ENCODE measurements at regions of chr17 and their contacts with region 1.

Region 1: GRCh38 chr17:73591296-73592078 is 52.8 kb downstream of the SDK2 start:
- DNase-seq: peak; percentile 76
- ATAC-seq: peak; percentile 78
- H3K4me3 ChIP-seq: peak overlapping the region in 4 of 5 experiments; percentile 32 to 59 (median 44)
- H3K4me3 Mint-ChIP-seq: peak overlapping the region; percentile 88
- H3K27ac ChIP-seq: peak overlapping the region; percentile 87 to 97
- H3K27ac Mint-ChIP-seq: peak overlapping the region; percentile 97
- H3K4me1 ChIP-seq: peaks cover 100% of the 10 kb centered on the region in 2 donors
- H3K4me1 Mint-ChIP-seq: peaks cover 98% of the 10 kb centered on the region
- H3K27me3 ChIP-seq: no peaks in the 10 kb centered on the region
- H3K27me3 Mint-ChIP-seq: no peaks in the 10 kb centered on the region
- CTCF ChIP-seq: no peak

Region 2: GRCh38 chr17:73546770-73547536 is 44.5 kb before region 1 on chr17:
- CTCF ChIA-PET with region 1: interaction called, 3 read pairs
- POLR2A ChIA-PET with region 1: no interaction called
- intact Hi-C with region 1: loop called (anchors 1 kb)
- DNase-seq: peak; percentile 76
- ATAC-seq: peak; percentile 98
- H3K4me3 ChIP-seq: no peak overlapping the region
- H3K4me3 Mint-ChIP-seq: no peak overlapping the region
- H3K27ac ChIP-seq: no peak overlapping the region
- H3K27ac Mint-ChIP-seq: peak overlapping the region; percentile 67
- H3K4me1 ChIP-seq: peaks cover 11 to 31% of the 10 kb centered on the region in 2 donors
- H3K4me1 Mint-ChIP-seq: peaks cover 39% of the 10 kb centered on the region
- H3K27me3 ChIP-seq: no peaks in the 10 kb centered on the region
- H3K27me3 Mint-ChIP-seq: no peaks in the 10 kb centered on the region
- CTCF ChIP-seq: no peak

Region 3: GRCh38 chr17:73566905-73567782 is 24.3 kb before region 1 on chr17:
- CTCF ChIA-PET with region 1: interaction called, 28 read pairs
- POLR2A ChIA-PET with region 1: interaction called, 16 read pairs
- intact Hi-C with region 1: loop called (anchors 1 kb)
- DNase-seq: peak; percentile 77
- ATAC-seq: peak; percentile 89
- H3K4me3 ChIP-seq: no peak overlapping the region
- H3K4me3 Mint-ChIP-seq: peak overlapping the region; percentile 52
- H3K27ac ChIP-seq: peak overlapping the region; percentile 74 to 93
- H3K27ac Mint-ChIP-seq: peak overlapping the region; percentile 95
- H3K4me1 ChIP-seq: peaks cover 28 to 31% of the 10 kb centered on the region in 2 donors
- H3K4me1 Mint-ChIP-seq: peaks cover 34% of the 10 kb centered on the region
- H3K27me3 ChIP-seq: no peaks in the 10 kb centered on the region
- H3K27me3 Mint-ChIP-seq: no peaks in the 10 kb centered on the region
- CTCF ChIP-seq: peak; percentile 5

Region 4: GRCh38 chr17:73639932-73640331 is 48.4 kb after region 1 on chr17:
- CTCF ChIA-PET with region 1: interaction called, 55 read pairs
- POLR2A ChIA-PET with region 1: interaction called, 6 read pairs
- intact Hi-C with region 1: loop called (anchors 1 kb)
- DNase-seq: no peak
- ATAC-seq: no peak
- H3K4me3 ChIP-seq: no peak overlapping the region
- H3K4me3 Mint-ChIP-seq: no peak overlapping the region
- H3K27ac ChIP-seq: no peak overlapping the region
- H3K27ac Mint-ChIP-seq: no peak overlapping the region
- H3K4me1 ChIP-seq: peaks cover 20 to 33% of the 10 kb centered on the region in 2 donors
- H3K4me1 Mint-ChIP-seq: peaks cover 27% of the 10 kb centered on the region
- H3K27me3 ChIP-seq: peaks cover 0 to 17% (median 0%) of the 10 kb centered on the region in 4 experiments
- H3K27me3 Mint-ChIP-seq: no peaks in the 10 kb centered on the region
- CTCF ChIP-seq: no peak

Region 5: GRCh38 chr17:73645050-73645978 is 53.8 kb after region 1 on chr17:
- CTCF ChIA-PET with region 1: interaction called, 55 read pairs
- POLR2A ChIA-PET with region 1: interaction called, 6 read pairs
- intact Hi-C with region 1: loop called (anchors 1 kb)
- DNase-seq: peak; percentile 82
- ATAC-seq: peak; percentile 70
- H3K4me3 ChIP-seq: peak overlapping the region in 3 of 5 experiments; percentile 41 to 72 (median 63)
- H3K4me3 Mint-ChIP-seq: peak overlapping the region; percentile 73
- H3K27ac ChIP-seq: no peak overlapping the region
- H3K27ac Mint-ChIP-seq: peak overlapping the region; percentile 50
- H3K4me1 ChIP-seq: peaks cover 20 to 38% of the 10 kb centered on the region in 2 donors
- H3K4me1 Mint-ChIP-seq: peaks cover 26% of the 10 kb centered on the region
- H3K27me3 ChIP-seq: peaks cover 0 to 23% (median 0%) of the 10 kb centered on the region in 4 experiments
- H3K27me3 Mint-ChIP-seq: peaks cover 4% of the 10 kb centered on the region
- CTCF ChIP-seq: no peak

Region 6: GRCh38 chr17:73710095-73710592 is 118.7 kb after region 1 on chr17:
- CTCF ChIA-PET with region 1: interaction called, 10 read pairs
- POLR2A ChIA-PET with region 1: no interaction called
- intact Hi-C with region 1: loop called (anchors 2 kb)
- DNase-seq: peak; percentile 77
- ATAC-seq: peak; percentile 61
- H3K4me3 ChIP-seq: no peak overlapping the region
- H3K4me3 Mint-ChIP-seq: no peak overlapping the region
- H3K27ac ChIP-seq: no peak overlapping the region
- H3K27ac Mint-ChIP-seq: no peak overlapping the region
- H3K4me1 ChIP-seq: peaks cover 19 to 28% of the 10 kb centered on the region in 2 donors
- H3K4me1 Mint-ChIP-seq: peaks cover 22% of the 10 kb centered on the region
- H3K27me3 ChIP-seq: peaks cover 0 to 11% (median 3%) of the 10 kb centered on the region in 4 experiments
- H3K27me3 Mint-ChIP-seq: peaks cover 17% of the 10 kb centered on the region
- CTCF ChIP-seq: peak; percentile 81

Region 7: GRCh38 chr17:73956669-73957465 is 365.4 kb after region 1 on chr17:
- CTCF ChIA-PET with region 1: no interaction called
- POLR2A ChIA-PET with region 1: no interaction called
- intact Hi-C with region 1: loop called (anchors 10 kb)
- DNase-seq: peak; percentile 53
- ATAC-seq: peak; percentile 62
- H3K4me3 ChIP-seq: no peak overlapping the region
- H3K4me3 Mint-ChIP-seq: no peak overlapping the region
- H3K27ac ChIP-seq: no peak overlapping the region
- H3K27ac Mint-ChIP-seq: no peak overlapping the region
- H3K4me1 ChIP-seq: peaks cover 11 to 12% of the 10 kb centered on the region in 2 donors
- H3K4me1 Mint-ChIP-seq: peaks cover 3% of the 10 kb centered on the region
- H3K27me3 ChIP-seq: peaks cover 0 to 23% (median 17%) of the 10 kb centered on the region in 4 experiments
- H3K27me3 Mint-ChIP-seq: peaks cover 14% of the 10 kb centered on the region
- CTCF ChIP-seq: peak; percentile 62

Measured in B cell (primary cell).